Right ventricle myocardium inferior (tissue), 1 donor: ENCODE measurements at regions of chr5 and their contacts with region 1.

Region 1: DNA sequence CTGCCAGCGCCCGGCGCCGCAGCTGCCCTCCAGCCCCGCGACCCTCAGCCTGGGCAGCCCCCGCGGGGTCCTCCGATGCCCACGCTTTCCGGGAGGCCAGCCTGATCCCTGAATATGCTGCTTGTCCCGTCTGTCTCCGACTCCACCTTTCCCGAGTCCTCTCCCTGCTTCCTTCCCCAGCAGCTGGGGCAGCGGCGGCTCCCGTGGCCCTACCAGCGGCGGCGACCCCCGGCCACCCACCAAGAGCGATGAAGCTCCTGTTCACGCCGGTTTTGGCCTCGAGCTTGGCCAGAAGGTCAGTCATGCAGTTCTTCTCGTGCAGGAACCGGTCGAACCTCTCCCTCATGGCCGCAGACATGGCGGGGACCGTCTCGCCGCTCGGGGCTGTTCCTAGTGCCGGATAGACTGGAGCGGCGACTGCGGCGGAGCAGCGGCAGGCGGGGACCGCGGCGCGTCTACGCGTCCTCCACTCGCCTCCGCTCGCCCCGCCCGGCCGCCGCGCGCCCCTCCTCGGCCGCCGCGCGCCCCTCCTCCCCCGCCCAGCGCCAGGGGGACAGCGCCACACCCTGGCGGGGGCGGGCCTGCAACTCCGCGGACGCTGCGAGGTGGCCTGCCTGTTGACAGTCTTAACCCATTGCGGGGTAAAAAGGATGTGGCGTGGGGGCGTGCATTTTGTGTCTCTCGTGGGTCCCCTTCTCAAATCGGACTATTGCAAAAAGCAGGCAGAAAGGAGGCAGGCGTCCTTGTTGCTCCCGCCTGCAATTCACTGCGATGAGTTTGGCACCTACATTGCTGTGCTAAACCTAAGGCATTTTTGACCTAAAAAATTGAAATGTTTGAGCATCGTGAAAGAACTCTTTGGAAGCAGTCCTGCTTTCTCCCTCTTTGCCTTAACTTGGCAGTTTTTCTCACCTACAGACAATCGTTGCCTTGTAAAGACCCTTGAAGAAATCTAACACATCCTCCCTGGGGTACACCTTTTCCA is at the start of gene REEP5:
- DNase-seq: peak; percentile 94
- ATAC-seq: peak; percentile 97
- total RNA-seq, gene REEP5: 125 TPM

Region 2: GRCh38 chr5:112795944-112796678 is 126.0 kb before region 1 on chr5:
- intact Hi-C with region 1: loop called (anchors 10 kb)
- DNase-seq: no peak
- ATAC-seq: no peak

Region 3: DNA sequence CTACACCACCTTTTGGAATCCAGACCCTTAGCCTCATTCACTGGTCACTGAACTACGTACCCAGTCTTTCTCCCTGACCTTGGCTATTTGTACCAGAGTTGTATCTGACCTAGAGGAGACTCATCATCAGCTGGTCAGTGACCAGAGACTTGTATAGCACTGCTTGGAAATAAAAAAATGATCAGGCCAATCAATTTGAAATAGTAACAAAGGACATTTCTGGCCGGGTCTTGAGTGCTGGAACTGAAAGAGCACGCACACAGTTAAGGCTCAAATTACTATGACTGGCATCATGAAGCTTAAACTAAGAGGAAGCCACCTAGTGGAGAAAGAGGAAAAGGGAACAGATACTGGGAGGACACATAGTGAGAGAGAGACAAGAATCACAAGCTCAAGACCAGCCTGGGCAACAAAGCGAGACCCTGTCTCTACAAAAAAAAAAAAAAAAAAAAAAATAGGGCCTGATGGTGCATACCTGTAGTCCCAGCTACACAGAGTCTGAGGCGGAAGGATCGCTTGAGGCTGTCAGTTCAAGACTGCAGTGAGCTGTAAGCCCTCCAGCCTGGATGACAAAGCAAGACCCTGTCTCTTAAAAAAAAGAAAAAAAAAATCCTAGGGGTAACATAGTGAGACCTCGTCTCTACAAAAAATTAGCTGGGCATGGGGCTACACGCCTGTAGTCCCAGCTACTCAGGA is 73.9 kb before region 1 on chr5:
- intact Hi-C with region 1: loop called (anchors 5 kb)
- DNase-seq: no peak
- ATAC-seq: peak; percentile 87

Region 4: DNA sequence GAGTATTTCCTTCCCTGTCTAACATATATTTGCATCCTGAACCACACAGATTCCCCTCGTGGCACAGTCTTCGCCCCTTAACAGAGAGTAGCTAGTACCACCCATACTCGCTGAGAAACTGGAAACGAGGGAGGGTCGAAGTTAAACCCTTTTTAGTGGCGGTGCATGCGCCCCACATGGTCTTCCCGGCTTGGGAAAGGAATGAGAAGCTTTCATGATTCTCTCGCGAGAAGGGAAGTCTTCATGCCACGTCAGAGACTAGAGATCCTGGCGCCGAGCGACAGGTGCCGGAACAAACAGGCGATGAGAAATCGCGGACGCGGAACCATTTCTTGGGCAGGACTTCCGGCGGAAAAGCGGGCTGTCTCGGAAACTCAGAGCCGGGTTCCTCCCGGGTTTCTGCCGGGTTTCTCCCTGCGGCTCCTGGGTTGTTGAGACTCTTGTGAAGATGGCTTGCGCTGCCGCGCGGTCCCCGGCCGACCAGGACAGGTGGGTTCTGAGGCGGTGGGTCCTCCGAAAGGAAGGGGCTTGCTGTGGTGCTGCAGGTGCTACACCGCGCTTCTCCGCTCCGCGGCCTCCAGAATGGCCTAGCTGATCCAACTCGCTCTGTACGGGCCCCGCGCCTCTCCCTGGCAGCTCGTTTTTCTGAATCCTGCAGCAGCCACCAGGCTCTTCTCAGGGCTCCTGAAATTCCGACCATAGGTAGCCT is 61.0 kb before region 1 on chr5 and contains the start of gene SRP19:
- intact Hi-C with region 1: loop called (anchors 2 kb)
- DNase-seq: peak; percentile 97
- ATAC-seq: peak; percentile 94
- total RNA-seq, gene SRP19: 24.8 TPM

Region 5: GRCh38 chr5:112965733-112966700 is 43.9 kb after region 1 on chr5:
- intact Hi-C with region 1: no loop called
- DNase-seq: no peak
- ATAC-seq: no peak

Region 6: GRCh38 chr5:112976432-112977309 is 54.5 kb after region 1 on chr5 and contains the start of gene DCP2:
- intact Hi-C with region 1: loop called (anchors 2 kb)
- DNase-seq: peak; percentile 97
- ATAC-seq: peak; percentile 99
- total RNA-seq, gene DCP2: 18.1 TPM